ENCODE measurements at regions of chr6 and their contacts with region 1.

Region 1: DNA sequence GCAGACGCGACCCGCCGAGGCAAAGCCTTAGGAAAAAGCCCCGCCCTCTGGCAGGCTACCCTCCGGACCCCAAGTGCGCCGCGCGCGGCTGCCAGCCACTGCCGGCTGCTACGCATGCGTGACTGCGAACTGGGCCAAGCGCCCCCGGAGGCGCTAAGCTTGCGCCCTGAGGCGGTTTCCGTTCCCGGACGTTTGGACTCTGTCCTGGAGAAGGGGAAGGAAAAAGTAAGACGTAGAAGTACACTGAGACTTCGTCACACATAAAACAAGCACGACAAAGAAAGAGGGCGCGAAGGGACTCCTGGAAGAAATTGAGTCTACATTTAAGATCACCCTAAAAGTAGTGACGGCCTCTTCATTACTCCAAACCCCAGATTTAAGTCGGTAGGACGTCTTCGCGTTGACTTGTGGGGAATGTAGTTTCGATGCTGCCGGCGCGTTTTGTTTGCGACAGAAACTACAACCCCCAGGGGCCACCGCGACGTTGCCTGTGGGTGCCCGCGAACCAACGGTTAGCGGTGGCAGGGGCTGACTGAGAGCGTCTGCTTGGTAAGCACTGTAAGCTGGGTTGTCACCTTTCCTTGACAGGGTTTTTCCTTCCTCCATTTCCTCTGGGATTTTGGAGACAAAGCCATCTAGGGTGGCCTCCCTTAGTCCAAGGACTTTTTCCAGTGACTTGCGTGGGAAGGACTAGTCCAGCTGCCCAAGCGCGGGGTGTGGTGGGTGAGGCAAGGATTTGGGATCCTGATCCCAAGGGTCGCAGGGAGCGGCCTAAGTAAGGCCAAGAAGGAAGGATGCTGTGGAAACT is at the start of gene CEP57L1:
- DNase-seq: peak; percentile 92 to 93 (median 92)
- H3K4me3 ChIP-seq: peak within 1 kb of the TSS; percentile 84 to 98 (median 86)
- H3K4me3 Mint-ChIP-seq: peak within 1 kb of the TSS; percentile 94 to 99
- H3K27ac ChIP-seq: peak within 1 kb of the TSS; percentile 94 to 95
- H3K27ac Mint-ChIP-seq: peak within 1 kb of the TSS; percentile 99 to 100 (median 99)
- H3K4me1 ChIP-seq: peaks cover 26 to 41% of the 10 kb centered on the region in 2 donors
- H3K4me1 Mint-ChIP-seq: peaks cover 46% of the 10 kb centered on the region
- H3K27me3 ChIP-seq: no peaks in the 10 kb centered on the region
- H3K27me3 Mint-ChIP-seq: peaks cover 0 to 5% (median 0%) of the 10 kb centered on the region in 3 donors
- CTCF ChIP-seq: no peak
- polyA plus RNA-seq, gene CEP57L1: 3.4 to 5.2 (median 3.9) TPM

Region 2: GRCh38 chr6:107964671-107965340 is 1130.4 kb before region 1 on chr6:
- intact Hi-C with region 1: loop called in 1 of 2 experiments (anchors 10 kb)
- DNase-seq: no peak
- H3K4me3 ChIP-seq: no peak overlapping the region
- H3K4me3 Mint-ChIP-seq: no peak overlapping the region
- H3K27ac ChIP-seq: no peak overlapping the region
- H3K27ac Mint-ChIP-seq: peak overlapping the region in 1 of 7 donors; percentile 31
- H3K4me1 ChIP-seq: no peaks in the 10 kb centered on the region
- H3K4me1 Mint-ChIP-seq: peaks cover 3% of the 10 kb centered on the region
- H3K27me3 ChIP-seq: no peaks in the 10 kb centered on the region
- H3K27me3 Mint-ChIP-seq: peaks cover 4 to 7% (median 6%) of the 10 kb centered on the region in 3 donors
- CTCF ChIP-seq: no peak

Region 3: DNA sequence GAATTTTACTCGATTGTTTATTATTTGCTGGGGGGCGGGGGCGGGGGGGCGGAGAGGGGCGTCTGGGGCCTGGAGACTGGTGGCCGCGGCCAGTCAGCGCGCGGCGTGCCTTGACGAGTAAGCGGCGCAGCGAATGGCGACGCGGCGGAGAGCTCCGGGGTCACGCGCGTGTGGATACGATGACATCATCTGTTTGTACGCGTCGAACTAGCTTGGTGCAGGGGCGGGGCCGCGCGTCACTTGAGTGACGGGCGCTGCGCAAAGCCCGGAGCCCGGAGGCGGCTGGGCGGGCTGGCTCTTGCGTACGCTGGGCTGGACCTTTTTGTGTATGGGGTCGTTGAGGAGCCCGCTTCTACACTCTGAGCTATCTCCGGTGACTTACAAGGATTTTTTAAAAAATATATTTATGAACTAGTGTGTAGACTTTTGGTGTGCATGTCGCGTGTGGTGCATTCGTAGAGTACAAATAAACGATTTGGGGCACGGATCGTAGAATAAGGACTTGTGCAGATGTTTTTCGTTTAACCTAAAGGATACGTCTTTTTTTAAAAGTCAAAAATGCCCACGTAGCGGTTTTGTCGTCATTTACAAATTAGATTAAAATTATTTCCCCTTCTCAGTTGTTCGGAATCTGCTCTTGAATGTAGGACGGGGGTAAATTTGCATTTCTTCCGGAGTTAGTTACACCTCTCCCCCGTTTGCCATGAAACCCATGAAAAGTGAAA is 536.7 kb before region 1 on chr6:
- intact Hi-C with region 1: loop called in 1 of 2 experiments (anchors 5 kb)
- DNase-seq: peak; percentile 98 to 99 (median 99)
- H3K4me3 ChIP-seq: peak overlapping the region; percentile 69 to 100 (median 98)
- H3K4me3 Mint-ChIP-seq: peak overlapping the region; percentile 90 to 95
- H3K27ac ChIP-seq: peak overlapping the region; percentile 97
- H3K27ac Mint-ChIP-seq: peak overlapping the region; percentile 95 to 98 (median 97)
- H3K4me1 ChIP-seq: peaks cover 21 to 32% of the 10 kb centered on the region in 2 donors
- H3K4me1 Mint-ChIP-seq: peaks cover 23% of the 10 kb centered on the region
- H3K27me3 ChIP-seq: no peaks in the 10 kb centered on the region
- H3K27me3 Mint-ChIP-seq: peaks cover 3 to 8% (median 6%) of the 10 kb centered on the region in 3 donors
- CTCF ChIP-seq: no peak

Region 4: DNA sequence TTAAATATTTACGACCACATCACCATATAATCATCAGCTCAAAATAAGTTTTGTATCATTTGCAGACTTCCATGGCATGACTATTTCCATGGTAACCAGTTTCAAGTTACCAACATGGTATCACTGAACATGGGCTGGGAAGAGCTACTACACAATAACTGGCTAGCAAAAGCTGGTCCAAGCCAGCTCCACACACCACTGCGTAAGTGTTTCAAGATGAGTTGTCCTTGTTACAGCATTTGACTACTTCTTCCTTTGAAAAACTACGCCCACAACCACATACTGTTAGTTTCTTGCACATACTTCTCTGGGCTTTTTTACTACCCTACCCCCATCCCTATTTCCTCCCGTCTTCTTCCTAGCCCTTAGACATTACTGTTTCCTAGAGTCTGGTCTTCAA is 278.5 kb after region 1 on chr6:
- intact Hi-C with region 1: loop called in 1 of 2 experiments (anchors 5 kb)
- DNase-seq: peak in 2 of 3 donors; percentile 52 to 59
- H3K4me3 ChIP-seq: no peak overlapping the region
- H3K4me3 Mint-ChIP-seq: peak overlapping the region in 1 of 2 donors; percentile 41
- H3K27ac ChIP-seq: peak overlapping the region in 1 of 2 donors; percentile 59
- H3K27ac Mint-ChIP-seq: peak overlapping the region; percentile 78 to 91 (median 82)
- H3K4me1 ChIP-seq: peaks cover 32 to 42% of the 10 kb centered on the region in 2 donors
- H3K4me1 Mint-ChIP-seq: peaks cover 53% of the 10 kb centered on the region
- H3K27me3 ChIP-seq: no peaks in the 10 kb centered on the region
- H3K27me3 Mint-ChIP-seq: no peaks in the 10 kb centered on the region
- CTCF ChIP-seq: no peak

Region 5: GRCh38 chr6:109382576-109383437 is 287.6 kb after region 1 on chr6:
- intact Hi-C with region 1: loop called in 1 of 2 experiments (anchors 10 kb)
- DNase-seq: peak; percentile 91 to 96 (median 94)
- H3K4me3 ChIP-seq: peak overlapping the region; percentile 75 to 99 (median 88)
- H3K4me3 Mint-ChIP-seq: peak overlapping the region; percentile 91 to 95
- H3K27ac ChIP-seq: peak overlapping the region; percentile 99 to 100
- H3K27ac Mint-ChIP-seq: peak overlapping the region; percentile 99 to 100 (median 100)
- H3K4me1 ChIP-seq: peaks cover 44 to 50% of the 10 kb centered on the region in 2 donors
- H3K4me1 Mint-ChIP-seq: peaks cover 53% of the 10 kb centered on the region
- H3K27me3 ChIP-seq: no peaks in the 10 kb centered on the region
- H3K27me3 Mint-ChIP-seq: no peaks in the 10 kb centered on the region
- CTCF ChIP-seq: no peak

Region 6: GRCh38 chr6:109455502-109456282 is 360.5 kb after region 1 on chr6 and contains the start of gene MICAL1:
- intact Hi-C with region 1: loop called in 1 of 2 experiments (anchors 10 kb)
- DNase-seq: peak; percentile 72 to 78 (median 77)
- H3K4me3 ChIP-seq: peak within 1 kb of the TSS; percentile 51 to 97 (median 78)
- H3K4me3 Mint-ChIP-seq: peak within 1 kb of the TSS; percentile 96 to 98
- H3K27ac ChIP-seq: peak within 1 kb of the TSS; percentile 84 to 93
- H3K27ac Mint-ChIP-seq: peak within 1 kb of the TSS; percentile 88 to 99 (median 97)
- H3K4me1 ChIP-seq: peaks cover 49 to 57% of the 10 kb centered on the region in 2 donors
- H3K4me1 Mint-ChIP-seq: peaks cover 51% of the 10 kb centered on the region
- H3K27me3 ChIP-seq: no peaks in the 10 kb centered on the region
- H3K27me3 Mint-ChIP-seq: no peaks in the 10 kb centered on the region
- CTCF ChIP-seq: peak; percentile 35
- polyA plus RNA-seq, gene MICAL1: 7.5 to 227 (median 13.2) TPM

Region 7: DNA sequence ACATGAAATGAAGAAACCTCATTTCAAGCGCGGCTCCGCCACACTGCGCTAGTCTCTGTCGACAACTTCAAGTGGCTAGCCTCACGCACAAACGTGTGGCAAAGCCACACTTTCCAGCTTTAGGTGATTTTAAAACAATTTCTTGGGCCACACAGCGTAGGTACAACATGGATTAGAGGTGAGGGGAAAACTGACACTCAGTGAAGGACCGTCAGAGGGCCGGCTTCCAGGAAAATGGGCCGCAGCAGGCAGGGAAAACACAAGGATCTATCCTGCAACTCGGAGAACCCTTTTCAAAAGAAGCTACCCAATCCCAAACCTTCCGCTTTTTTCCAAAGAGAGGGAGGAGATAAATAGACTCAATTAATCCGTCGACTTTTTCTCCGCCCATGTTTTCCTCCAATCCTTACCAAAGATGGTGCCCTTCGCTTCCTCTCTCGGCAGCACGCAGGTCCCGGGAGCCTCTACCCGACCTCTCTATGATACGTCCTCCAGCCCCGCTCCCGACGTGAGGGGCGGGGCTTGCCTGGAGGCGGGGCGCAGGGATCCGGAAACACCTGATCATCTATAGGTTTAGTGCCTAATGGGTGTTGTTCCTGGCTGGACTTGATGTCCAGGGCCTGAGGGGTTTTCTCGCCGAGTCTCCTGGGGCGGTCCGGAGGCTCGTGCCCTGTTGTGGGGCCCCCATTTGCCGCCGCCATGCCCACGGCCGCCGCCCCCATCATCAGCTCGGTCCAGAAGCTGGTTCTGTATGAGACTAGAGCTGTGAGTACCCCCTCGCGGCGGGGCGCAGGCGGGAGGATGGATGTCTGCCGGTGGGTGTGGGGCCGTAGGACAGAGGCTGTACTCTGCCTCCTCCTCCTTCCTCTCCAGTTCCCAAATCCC is 595.7 kb after region 1 on chr6 and contains the starts of genes AK9 and FIG4:
- intact Hi-C with region 1: loop called in 1 of 2 experiments (anchors 10 kb)
- DNase-seq: peak; percentile 84 to 92 (median 85)
- H3K4me3 ChIP-seq: peak within 1 kb of the TSS; percentile 76 to 96 (median 95)
- H3K4me3 Mint-ChIP-seq: peak within 1 kb of the TSS; percentile 87 to 95
- H3K27ac ChIP-seq: peak within 1 kb of the TSS; percentile 82 to 96
- H3K27ac Mint-ChIP-seq: peak within 1 kb of the TSS; percentile 92 to 96 (median 93)
- H3K4me1 ChIP-seq: peaks cover 38 to 53% of the 10 kb centered on the region in 2 donors
- H3K4me1 Mint-ChIP-seq: peaks cover 55% of the 10 kb centered on the region
- H3K27me3 ChIP-seq: no peaks in the 10 kb centered on the region
- H3K27me3 Mint-ChIP-seq: peaks cover 0 to 4% (median 0%) of the 10 kb centered on the region in 3 donors
- CTCF ChIP-seq: no peak
- polyA plus RNA-seq, gene AK9: 2.6 to 3.1 (median 2.8) TPM
- polyA plus RNA-seq, gene FIG4: 27.2 to 65.3 (median 53.7) TPM

Measured in CD14-positive monocyte (primary cell).